ENCODE measurements at regions of chr3 and their contacts with region 1.

Region 1: DNA sequence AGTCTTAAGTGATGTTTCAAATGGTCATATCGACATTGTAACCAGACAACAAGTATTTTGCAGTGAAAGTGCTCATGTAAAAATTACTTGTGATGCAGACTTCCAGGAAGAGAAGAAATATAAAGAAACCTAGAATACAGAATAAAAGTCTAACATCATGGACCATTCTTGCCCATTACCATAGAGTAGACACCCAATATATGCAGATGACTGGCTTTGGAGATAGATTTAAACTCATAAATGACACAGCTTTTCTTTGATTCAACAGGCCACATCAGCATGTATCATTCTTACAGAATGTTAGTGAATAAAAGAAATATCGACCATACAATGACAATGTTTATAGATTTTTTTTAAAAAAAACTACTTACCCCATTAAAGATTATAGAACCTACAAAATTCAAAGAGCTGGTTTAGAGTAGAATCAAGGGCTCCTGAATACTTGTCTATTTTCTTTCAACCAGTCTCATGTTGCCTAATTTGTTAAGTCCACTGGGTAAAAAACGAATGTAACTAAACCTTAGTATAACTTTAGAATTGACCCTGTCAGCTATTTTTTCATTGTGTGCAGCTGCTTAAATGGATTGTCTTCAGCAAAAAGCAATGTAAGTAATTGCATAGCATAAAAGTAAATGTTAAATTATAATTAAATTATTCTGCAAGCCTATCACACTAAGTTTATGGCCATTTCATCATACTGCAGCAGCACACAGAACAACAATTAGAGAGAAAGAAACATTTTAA is 268.7 kb upstream of the AGTR1 start:
- DNase-seq: no peak
- ATAC-seq: no peak
- H3K4me3 ChIP-seq: no peak overlapping the region
- H3K27ac ChIP-seq: no peak overlapping the region
- H3K4me1 ChIP-seq: no peaks in the 10 kb centered on the region
- H3K27me3 ChIP-seq: no peaks in the 10 kb centered on the region
- CTCF ChIP-seq: no peak
- POLR2A ChIP-seq: no peak

Region 2: DNA sequence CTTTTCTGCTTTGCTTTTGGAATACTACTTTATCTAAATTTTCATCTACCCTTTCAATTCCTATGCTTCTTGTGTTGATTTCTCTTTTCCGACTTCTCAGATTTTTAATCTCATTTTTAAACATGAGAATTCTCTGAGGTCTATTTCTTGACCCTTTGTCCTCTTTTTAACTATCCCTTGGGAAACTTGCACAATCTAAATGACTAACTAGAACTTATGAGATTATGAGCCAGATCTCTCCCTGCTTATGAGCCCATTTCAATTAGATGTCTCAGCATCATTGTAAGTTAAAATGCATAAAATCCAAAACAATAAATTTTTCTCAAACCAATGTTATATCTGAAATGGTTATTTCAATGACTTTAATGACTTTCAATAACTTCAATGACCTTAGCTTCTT is 28.3 kb before region 1 on chr3:
- in situ Hi-C with region 1: no loop called
- intact Hi-C with region 1: loop called (anchors 2 kb)
- DNase-seq: no peak
- ATAC-seq: peak; percentile 62 to 68
- H3K4me3 ChIP-seq: no peak overlapping the region
- H3K27ac ChIP-seq: peak overlapping the region in 3 of 4 donors; percentile 7 to 53 (median 53)
- H3K4me1 ChIP-seq: peaks cover 0 to 5% of the 10 kb centered on the region in 2 donors
- H3K27me3 ChIP-seq: no peaks in the 10 kb centered on the region
- CTCF ChIP-seq: no peak
- POLR2A ChIP-seq: no peak

Region 3: DNA sequence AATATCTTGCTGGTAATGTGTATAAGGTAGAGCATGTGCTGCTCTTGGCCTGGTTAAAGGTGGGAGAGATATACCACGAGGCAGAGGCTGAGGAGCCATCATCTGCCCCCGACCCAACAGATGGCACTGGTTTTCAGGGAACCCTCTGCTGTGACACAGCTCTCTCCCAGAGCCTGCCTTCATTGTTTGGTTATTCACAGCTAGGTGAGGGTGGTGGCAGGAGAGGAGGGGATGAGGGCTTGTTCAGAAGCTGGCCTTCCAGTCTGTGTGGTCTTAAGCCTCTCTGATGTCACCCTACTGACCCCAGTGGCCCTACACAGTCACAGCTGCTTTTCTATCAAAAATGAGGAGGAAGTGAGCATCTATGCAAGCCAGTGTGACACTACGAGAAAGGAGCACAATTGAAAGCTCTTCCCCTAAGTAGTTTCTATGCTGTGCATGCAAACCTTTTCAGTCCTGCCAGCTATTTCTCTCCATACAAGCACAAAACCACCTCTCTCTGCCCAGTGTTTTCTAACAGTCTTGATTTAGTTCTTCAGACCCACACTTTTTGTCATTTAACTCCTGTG is 10.3 kb after region 1 on chr3:
- in situ Hi-C with region 1: no loop called
- intact Hi-C with region 1: no loop called
- DNase-seq: no peak
- ATAC-seq: no peak
- H3K4me3 ChIP-seq: no peak overlapping the region
- H3K27ac ChIP-seq: no peak overlapping the region
- H3K4me1 ChIP-seq: no peaks in the 10 kb centered on the region
- H3K27me3 ChIP-seq: no peaks in the 10 kb centered on the region
- CTCF ChIP-seq: no peak
- POLR2A ChIP-seq: no peak

Region 4: DNA sequence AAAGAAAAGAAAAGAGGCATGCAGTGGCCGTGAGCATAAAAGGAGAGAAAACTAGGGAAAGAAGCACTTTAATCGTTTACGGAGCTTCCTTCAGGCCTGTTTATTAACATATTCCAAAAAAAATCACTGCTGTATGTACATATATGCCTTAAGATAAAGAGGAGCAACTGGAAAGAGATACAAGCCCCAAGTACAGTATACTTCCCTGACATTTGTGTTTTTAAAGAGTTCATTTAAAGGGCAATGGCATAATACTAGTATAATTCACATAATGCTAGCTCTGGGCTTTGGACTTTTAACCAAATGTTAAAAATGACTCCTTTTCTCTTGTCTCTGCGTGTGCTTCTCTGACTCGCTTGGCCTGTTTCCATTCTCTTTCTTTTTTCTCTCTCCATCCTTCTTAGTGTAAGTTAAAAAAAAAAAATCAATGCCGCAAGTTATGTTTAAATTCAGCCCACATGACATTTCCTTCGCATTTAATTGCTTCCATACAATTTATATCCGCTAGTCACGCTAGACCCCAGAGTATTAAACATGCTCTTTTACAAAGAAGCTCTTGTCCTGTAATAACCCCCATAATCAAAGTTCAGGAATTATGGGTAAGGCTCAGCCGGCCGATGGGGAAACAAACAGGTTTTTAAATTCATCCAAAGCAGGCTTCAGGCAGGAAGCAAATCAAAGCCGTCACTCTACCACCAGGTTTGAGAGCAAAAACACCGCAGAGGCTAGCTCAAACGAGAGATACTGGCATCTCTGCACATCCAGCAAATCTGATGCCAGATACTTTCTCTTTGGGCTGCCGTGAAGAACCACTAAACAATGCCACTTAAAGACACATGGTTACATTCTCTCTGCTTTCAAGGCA is 1209.4 kb after region 1 on chr3:
- in situ Hi-C with region 1: no loop called
- intact Hi-C with region 1: no loop called
- DNase-seq: no peak
- ATAC-seq: no peak
- H3K4me3 ChIP-seq: peak overlapping the region; percentile 11 to 34 (median 28)
- H3K27ac ChIP-seq: peak overlapping the region in 3 of 4 donors; percentile 26 to 41 (median 34)
- H3K4me1 ChIP-seq: peaks cover 29 to 45% of the 10 kb centered on the region in 2 donors
- H3K27me3 ChIP-seq: no peaks in the 10 kb centered on the region
- CTCF ChIP-seq: no peak
- POLR2A ChIP-seq: no peak